B cell (primary cell): ENCODE measurements at regions of chrX and their contacts with region 1.

Region 1: GRCh38 chrX:83128211-83128610 is 379.9 kb upstream of the POU3F4 start:
- DNase-seq: no peak
- ATAC-seq: no peak
- H3K4me3 ChIP-seq: no peak overlapping the region
- H3K4me3 Mint-ChIP-seq: no peak overlapping the region
- H3K27ac ChIP-seq: no peak overlapping the region
- H3K27ac Mint-ChIP-seq: no peak overlapping the region
- H3K4me1 ChIP-seq: no peaks in the 10 kb centered on the region
- H3K4me1 Mint-ChIP-seq: no peaks in the 10 kb centered on the region
- H3K27me3 ChIP-seq: no peaks in the 10 kb centered on the region
- H3K27me3 Mint-ChIP-seq: no peaks in the 10 kb centered on the region
- CTCF ChIP-seq: no peak

Region 2: DNA sequence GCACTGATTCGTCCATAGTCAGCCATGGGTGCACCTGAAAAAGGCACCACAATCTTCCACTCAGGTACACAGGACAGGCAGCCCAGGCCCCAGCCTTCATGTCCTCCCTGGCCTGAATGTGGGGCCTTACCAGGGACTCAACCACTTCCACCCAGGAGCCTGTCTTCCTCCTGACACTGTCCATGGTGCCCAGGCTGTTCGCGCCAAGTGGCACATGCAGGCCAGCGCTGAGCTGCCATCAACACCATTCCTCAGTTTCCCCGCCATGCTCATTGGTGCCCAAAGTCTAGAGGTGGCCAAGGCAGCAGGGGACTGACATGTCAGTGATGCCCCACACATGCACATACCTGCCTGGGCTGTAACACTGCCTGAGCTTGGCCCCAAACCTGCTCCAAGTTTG is 57.7 kb after region 1 on chrX:
- CTCF ChIA-PET with region 1: no interaction called
- POLR2A ChIA-PET with region 1: no interaction called
- intact Hi-C with region 1: loop called (anchors 2 kb)
- DNase-seq: no peak
- ATAC-seq: no peak
- H3K4me3 ChIP-seq: no peak overlapping the region
- H3K4me3 Mint-ChIP-seq: no peak overlapping the region
- H3K27ac ChIP-seq: no peak overlapping the region
- H3K27ac Mint-ChIP-seq: no peak overlapping the region
- H3K4me1 ChIP-seq: no peaks in the 10 kb centered on the region
- H3K4me1 Mint-ChIP-seq: no peaks in the 10 kb centered on the region
- H3K27me3 ChIP-seq: no peaks in the 10 kb centered on the region
- H3K27me3 Mint-ChIP-seq: no peaks in the 10 kb centered on the region
- CTCF ChIP-seq: no peak